T-cell (primary cell): ENCODE measurements at regions of chr17 and their contacts with region 1.

Region 1: DNA sequence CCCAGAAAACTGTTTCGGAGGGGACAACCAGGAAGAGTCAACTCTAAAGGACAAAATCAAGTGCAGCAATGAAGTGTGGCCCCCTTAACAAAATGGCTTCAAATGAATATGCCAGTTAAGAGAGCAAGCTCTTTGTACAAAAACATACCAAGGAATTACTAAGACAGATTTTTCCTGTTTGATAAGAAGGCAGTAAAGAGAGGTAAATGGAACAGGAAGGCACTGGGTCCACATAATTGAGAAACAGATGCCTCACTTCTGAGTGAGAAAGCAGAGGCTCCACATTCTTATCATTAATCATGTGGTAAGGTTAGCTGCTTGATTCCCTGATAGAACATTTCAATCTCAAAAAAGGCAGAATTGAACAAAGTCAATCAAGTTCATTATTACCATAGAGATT is 44.9 kb downstream of the MBTD1 start:
- DNase-seq: no peak
- ATAC-seq: no peak
- H3K4me3 ChIP-seq: no peak overlapping the region
- H3K4me3 Mint-ChIP-seq: no peak overlapping the region
- H3K27ac ChIP-seq: no peak overlapping the region
- H3K27ac Mint-ChIP-seq: no peak overlapping the region
- H3K4me1 ChIP-seq: no peaks in the 10 kb centered on the region
- H3K4me1 Mint-ChIP-seq: peaks cover 0 to 11% (median 0%) of the 10 kb centered on the region in 3 donors
- H3K27me3 ChIP-seq: no peaks in the 10 kb centered on the region
- H3K27me3 Mint-ChIP-seq: no peaks in the 10 kb centered on the region

Region 2: DNA sequence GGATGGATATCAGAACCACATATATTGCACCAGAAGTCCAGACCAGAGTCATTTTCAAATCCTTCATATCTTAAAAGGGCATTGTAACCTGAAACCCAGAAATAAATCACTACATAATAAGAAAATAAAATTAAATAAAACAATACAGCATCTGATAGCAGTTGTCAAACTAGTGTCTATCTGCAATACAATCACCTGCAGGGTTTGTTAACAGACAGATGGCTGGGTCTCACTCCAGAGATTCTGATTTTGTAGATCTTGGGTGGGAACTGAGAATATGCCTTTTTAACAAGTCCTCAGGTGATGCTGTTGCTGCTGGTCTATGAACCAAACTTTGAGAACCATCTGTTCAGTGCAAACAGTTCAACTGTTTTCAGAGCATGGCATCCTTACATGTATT is 11.1 kb before region 1 on chr17:
- CTCF ChIA-PET with region 1: no interaction called
- POLR2A ChIA-PET with region 1: no interaction called
- DNase-seq: no peak
- ATAC-seq: no peak
- H3K4me3 ChIP-seq: no peak overlapping the region
- H3K4me3 Mint-ChIP-seq: no peak overlapping the region
- H3K27ac ChIP-seq: no peak overlapping the region
- H3K27ac Mint-ChIP-seq: no peak overlapping the region
- H3K4me1 ChIP-seq: peaks cover 4 to 11% of the 10 kb centered on the region in 2 experiments
- H3K4me1 Mint-ChIP-seq: peaks cover 0 to 18% (median 9%) of the 10 kb centered on the region in 3 donors
- H3K27me3 ChIP-seq: no peaks in the 10 kb centered on the region
- H3K27me3 Mint-ChIP-seq: no peaks in the 10 kb centered on the region

Region 3: GRCh38 chr17:51228161-51228560 is 13.2 kb after region 1 on chr17:
- CTCF ChIA-PET with region 1: no interaction called
- POLR2A ChIA-PET with region 1: interaction called, 10 to 14 read pairs
- DNase-seq: no peak
- ATAC-seq: no peak
- H3K4me3 ChIP-seq: no peak overlapping the region
- H3K4me3 Mint-ChIP-seq: no peak overlapping the region
- H3K27ac ChIP-seq: no peak overlapping the region
- H3K27ac Mint-ChIP-seq: no peak overlapping the region
- H3K4me1 ChIP-seq: peaks cover 0 to 6% of the 10 kb centered on the region in 2 experiments
- H3K4me1 Mint-ChIP-seq: peaks cover 34 to 46% (median 44%) of the 10 kb centered on the region in 3 donors
- H3K27me3 ChIP-seq: no peaks in the 10 kb centered on the region
- H3K27me3 Mint-ChIP-seq: no peaks in the 10 kb centered on the region